ENCODE measurements at regions of chr12 and their contacts with region 1.

Region 1: GRCh38 chr12:121060149-121061001 is 21.3 kb upstream of the OASL start:
- DNase-seq: peak; percentile 71
- ATAC-seq: peak; percentile 96
- H3K4me3 Mint-ChIP-seq: peak overlapping the region; percentile 68
- H3K27ac Mint-ChIP-seq: peak overlapping the region; percentile 93
- H3K4me1 Mint-ChIP-seq: peaks cover 13% of the 10 kb centered on the region
- H3K27me3 Mint-ChIP-seq: no peaks in the 10 kb centered on the region
- CTCF ChIP-seq: peak; percentile 61

Region 2: DNA sequence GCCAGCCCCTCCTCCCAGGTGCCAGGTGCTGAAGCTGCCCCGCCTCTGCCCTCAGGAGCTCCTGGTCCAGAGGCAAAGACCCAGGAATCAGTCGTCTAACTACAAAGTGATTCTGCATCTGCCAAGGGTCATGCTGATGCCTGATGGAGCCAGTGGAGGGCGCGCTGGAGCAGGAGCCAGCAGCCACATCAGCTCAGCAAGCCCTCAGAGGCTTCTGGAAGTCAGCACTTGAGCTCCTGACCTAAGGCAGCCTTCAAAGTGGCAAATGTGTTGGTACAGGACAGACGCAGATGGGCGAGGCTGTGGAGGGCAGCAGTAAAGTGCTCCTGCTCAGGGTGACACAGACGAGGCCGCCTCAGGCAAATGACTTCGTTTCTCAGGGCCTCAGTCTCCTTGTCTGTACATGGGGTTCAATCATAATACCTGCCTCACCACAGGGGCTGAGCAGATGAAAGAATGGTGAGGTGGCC is 55.0 kb before region 1 on chr12:
- CTCF ChIA-PET with region 1: interaction called, 88 read pairs
- POLR2A ChIA-PET with region 1: no interaction called
- intact Hi-C with region 1: no loop called
- DNase-seq: peak; percentile 76
- ATAC-seq: peak; percentile 93
- H3K4me3 Mint-ChIP-seq: no peak overlapping the region
- H3K27ac Mint-ChIP-seq: peak overlapping the region; percentile 48
- H3K4me1 Mint-ChIP-seq: no peaks in the 10 kb centered on the region
- H3K27me3 Mint-ChIP-seq: no peaks in the 10 kb centered on the region
- CTCF ChIP-seq: peak; percentile 75

Region 3: DNA sequence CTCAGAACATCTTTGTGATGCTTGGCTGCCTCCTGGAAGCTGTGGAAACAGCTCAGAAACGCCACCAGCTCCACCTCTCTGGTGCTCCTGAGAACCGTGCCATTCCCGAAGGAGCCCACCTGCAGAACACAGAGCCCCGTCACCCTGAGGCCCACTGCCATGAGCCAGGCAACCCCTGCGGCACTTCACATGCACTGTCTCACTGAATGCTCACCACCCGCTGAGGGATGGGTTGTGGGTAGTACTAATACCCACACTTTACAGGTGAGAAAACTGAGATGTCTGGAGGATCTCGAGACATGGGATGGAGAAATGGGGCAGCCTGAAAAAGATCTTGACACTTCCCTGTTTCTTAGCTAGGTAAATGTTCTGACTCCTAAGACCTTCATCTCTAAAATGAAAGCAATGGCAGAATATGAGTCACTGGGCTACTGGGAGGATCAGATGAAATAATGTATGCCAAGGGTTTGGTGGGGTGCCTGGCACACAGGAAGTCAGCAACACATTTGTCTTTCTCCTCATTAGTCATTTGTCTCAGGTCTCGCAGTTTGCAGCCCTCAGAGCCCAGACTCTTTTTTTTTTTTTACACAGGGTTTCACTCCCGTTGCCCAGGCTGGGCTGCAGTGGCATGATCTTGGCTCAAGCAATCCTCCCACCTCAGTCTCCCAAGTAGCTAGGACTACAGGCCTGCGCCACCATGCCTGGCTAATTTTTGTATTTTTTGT is 26.6 kb before region 1 on chr12:
- CTCF ChIA-PET with region 1: interaction called, 20 read pairs
- POLR2A ChIA-PET with region 1: interaction called, 9 read pairs
- intact Hi-C with region 1: no loop called
- DNase-seq: peak; percentile 83
- ATAC-seq: peak; percentile 79
- H3K4me3 Mint-ChIP-seq: peak overlapping the region; percentile 35
- H3K27ac Mint-ChIP-seq: peak overlapping the region; percentile 85
- H3K4me1 Mint-ChIP-seq: peaks cover 51% of the 10 kb centered on the region
- H3K27me3 Mint-ChIP-seq: no peaks in the 10 kb centered on the region
- CTCF ChIP-seq: no peak

Region 4: GRCh38 chr12:121085506-121086353 is 25.4 kb after region 1 on chr12:
- CTCF ChIA-PET with region 1: interaction called, 11 read pairs
- POLR2A ChIA-PET with region 1: no interaction called
- intact Hi-C with region 1: no loop called
- DNase-seq: no peak
- ATAC-seq: no peak
- H3K4me3 Mint-ChIP-seq: no peak overlapping the region
- H3K27ac Mint-ChIP-seq: no peak overlapping the region
- H3K4me1 Mint-ChIP-seq: peaks cover 14% of the 10 kb centered on the region
- H3K27me3 Mint-ChIP-seq: no peaks in the 10 kb centered on the region
- CTCF ChIP-seq: no peak

Region 5: DNA sequence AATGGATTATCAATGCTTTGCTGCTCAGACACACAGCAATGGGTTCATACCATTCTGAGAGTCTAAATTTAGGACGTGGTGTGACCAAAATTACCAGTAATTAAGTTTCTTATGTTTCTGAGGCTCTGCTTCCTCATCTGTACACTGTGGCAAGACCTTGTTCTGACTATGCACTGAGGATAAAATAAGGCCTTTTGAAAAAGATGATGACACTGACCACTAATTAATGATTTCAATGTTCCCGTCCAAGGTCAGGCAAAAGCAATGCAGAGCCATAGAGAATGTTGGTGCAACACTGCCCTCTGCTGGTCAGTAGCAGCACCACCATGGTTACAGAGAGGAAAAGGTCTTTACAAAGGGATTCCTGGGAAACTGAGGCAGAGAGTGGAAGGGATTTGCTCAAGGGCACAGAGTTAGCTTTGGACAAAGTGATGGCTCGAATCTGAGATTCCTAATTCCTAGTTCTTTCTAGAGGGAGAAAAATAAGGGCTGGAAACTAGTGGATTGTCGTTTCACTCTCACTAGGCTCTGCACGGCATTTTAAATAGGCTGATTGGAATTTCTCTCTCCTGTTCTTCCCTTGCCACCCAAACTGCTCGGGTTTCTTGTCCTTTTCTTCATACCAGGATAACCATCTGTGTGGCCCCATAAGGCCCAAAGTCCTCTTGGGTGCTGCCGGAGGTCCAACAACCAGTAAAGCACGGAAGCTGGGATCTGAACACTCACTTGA is 50.0 kb after region 1 on chr12:
- CTCF ChIA-PET with region 1: interaction called, 37 read pairs
- POLR2A ChIA-PET with region 1: no interaction called
- intact Hi-C with region 1: no loop called
- DNase-seq: peak; percentile 82
- ATAC-seq: peak; percentile 86
- H3K4me3 Mint-ChIP-seq: no peak overlapping the region
- H3K27ac Mint-ChIP-seq: no peak overlapping the region
- H3K4me1 Mint-ChIP-seq: peaks cover 2% of the 10 kb centered on the region
- H3K27me3 Mint-ChIP-seq: no peaks in the 10 kb centered on the region
- CTCF ChIP-seq: peak; percentile 97

Region 6: GRCh38 chr12:121300083-121300819 is 239.9 kb after region 1 on chr12:
- CTCF ChIA-PET with region 1: no interaction called
- POLR2A ChIA-PET with region 1: no interaction called
- intact Hi-C with region 1: no loop called
- DNase-seq: no peak
- ATAC-seq: no peak
- H3K4me3 Mint-ChIP-seq: no peak overlapping the region
- H3K27ac Mint-ChIP-seq: no peak overlapping the region
- H3K4me1 Mint-ChIP-seq: peaks cover 11% of the 10 kb centered on the region
- H3K27me3 Mint-ChIP-seq: no peaks in the 10 kb centered on the region
- CTCF ChIP-seq: no peak

Measured in activated CD8-positive, alpha-beta T cell treated with anti-CD3 and anti-CD28 coated beads for 36 hours (primary cell).